HEK293 (cell line): ENCODE measurements at regions of chr11 and their contacts with region 1.

Region 1: DNA sequence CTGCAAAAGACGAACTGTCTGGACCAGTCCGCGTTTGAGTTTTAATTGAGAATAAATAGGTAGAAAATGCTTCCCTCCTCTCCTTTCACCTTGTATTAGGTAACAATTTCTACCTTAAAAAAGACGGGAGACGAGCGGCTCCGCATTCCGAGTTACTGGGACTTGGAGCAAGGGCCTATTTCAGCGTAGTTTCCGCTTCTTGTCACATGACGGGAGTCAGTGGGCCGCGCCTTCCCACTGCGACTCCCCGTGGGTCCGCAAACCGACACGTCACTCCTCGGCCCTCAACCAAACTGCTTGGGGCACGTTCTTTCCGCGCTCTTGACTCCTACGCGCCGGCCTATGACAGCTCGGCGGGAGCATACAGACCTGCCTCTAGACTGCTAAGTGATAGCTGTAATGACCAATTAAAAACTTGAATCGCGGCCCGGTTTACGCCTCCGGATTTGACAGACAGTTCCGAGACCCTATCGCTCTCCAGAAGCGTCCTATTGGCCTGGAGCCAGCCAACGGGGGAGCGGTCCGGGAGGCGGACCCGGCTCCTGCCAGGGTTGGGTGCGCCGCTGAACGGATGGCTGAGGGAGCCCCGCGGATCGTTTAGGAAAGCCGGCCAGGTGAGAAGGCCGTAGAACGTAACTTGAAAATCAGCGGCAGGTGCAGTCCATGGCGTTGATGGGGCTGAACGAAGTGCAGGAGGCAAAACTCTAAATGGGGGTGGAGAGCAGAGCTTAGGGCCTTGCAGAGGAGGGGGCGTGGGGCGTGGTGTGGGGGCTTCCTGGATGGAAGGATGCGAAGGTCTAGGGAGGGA is at the start of gene STT3A:
- H3K4me3 ChIP-seq: peak within 1 kb of the TSS; percentile 91
- H3K27ac ChIP-seq: peak within 1 kb of the TSS; percentile 63
- H3K4me1 ChIP-seq: no peaks in the 10 kb centered on the region; the same call in 1 of the 2 replicates
- CTCF ChIP-seq: no peak

Region 2: DNA sequence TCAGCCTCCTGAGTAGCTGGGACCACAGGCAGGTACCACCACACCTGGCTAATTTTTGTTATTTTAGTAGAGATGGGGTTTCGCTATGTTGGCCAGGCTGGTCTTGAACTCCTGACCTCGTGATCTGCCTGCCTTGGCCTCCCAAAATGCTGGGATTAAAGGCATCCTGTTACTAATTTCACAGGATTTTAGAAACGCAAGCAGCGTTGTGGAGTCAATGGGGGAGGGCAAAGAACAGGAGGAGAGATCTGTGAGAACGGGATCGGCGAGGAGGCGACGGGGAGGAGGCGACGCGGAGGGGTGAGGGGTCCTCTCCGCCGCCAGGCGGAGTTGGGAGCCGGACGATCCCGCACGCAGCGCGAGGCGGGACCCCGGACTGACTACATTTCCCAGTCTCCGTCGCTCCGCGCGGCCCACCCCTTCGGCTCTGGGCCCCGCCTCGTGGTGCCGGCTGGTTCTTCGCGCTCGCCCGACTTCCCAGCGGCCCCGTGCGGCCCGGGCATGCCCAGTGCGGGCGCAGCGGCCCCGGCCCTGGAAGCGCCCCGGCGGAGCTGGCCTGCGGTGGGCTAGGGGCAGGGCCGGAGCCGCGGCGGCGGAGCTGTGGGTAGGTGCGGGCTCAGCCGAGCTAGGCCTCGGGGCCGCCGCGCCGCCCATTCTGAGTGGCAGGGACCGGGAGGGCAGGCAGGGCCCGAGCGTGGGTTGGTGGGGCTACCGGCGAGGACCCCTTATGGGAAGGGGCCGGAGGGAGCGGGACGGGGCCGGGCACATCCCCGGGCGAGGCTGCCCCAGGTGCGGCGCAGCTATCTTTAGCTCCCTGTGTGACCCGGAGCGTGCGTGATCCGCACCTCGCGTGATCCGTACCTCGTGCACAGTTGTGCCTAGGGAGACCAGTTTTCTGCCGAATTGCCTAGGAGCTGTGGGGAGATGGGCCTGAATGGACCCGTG is 23.3 kb before region 1 on chr11 and contains the start of gene EI24:
- CTCF ChIA-PET with region 1: no interaction called
- POLR2A ChIA-PET with region 1: interaction called, 25 read pairs
- H3K4me3 ChIP-seq: peak within 1 kb of the TSS; percentile 67
- H3K27ac ChIP-seq: peak within 1 kb of the TSS; percentile 66
- H3K4me1 ChIP-seq: no peaks in the 10 kb centered on the region; the same call in none of the 2 replicates
- CTCF ChIP-seq: peak; percentile 80

Region 3: DNA sequence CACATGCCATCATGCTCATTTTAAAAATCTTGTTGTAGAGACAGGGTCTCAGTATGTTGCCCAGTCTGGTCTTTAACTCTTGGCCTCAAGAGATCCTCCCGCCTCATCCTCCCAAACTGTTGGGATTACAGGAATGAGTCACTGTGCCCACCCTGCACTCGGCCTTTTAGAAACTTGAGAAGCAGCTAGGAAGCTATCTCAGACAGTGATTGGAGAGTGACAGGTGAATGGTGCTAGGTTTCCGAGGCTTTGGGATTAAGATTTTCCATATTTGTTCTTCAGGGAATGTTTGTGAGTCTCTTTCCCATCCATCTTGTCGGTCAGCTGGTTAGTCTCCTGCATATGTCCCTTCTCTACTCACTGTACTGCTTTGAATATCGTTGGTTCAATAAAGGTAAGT is 12.7 kb before region 1 on chr11:
- CTCF ChIA-PET with region 1: interaction called, 5 read pairs
- POLR2A ChIA-PET with region 1: interaction called, 13 read pairs
- H3K4me3 ChIP-seq: no peak overlapping the region
- H3K27ac ChIP-seq: no peak overlapping the region
- H3K4me1 ChIP-seq: no peaks in the 10 kb centered on the region
- CTCF ChIP-seq: no peak

Region 4: GRCh38 chr11:125625630-125626287 is 33.2 kb after region 1 on chr11:
- CTCF ChIA-PET with region 1: no interaction called
- POLR2A ChIA-PET with region 1: interaction called, 24 read pairs
- H3K4me3 ChIP-seq: peak overlapping the region; percentile 74
- H3K27ac ChIP-seq: peak overlapping the region; percentile 94
- H3K4me1 ChIP-seq: peaks cover under 1% of the 10 kb centered on the region; the same call in 1 of the 2 replicates
- CTCF ChIP-seq: no peak

Region 5: DNA sequence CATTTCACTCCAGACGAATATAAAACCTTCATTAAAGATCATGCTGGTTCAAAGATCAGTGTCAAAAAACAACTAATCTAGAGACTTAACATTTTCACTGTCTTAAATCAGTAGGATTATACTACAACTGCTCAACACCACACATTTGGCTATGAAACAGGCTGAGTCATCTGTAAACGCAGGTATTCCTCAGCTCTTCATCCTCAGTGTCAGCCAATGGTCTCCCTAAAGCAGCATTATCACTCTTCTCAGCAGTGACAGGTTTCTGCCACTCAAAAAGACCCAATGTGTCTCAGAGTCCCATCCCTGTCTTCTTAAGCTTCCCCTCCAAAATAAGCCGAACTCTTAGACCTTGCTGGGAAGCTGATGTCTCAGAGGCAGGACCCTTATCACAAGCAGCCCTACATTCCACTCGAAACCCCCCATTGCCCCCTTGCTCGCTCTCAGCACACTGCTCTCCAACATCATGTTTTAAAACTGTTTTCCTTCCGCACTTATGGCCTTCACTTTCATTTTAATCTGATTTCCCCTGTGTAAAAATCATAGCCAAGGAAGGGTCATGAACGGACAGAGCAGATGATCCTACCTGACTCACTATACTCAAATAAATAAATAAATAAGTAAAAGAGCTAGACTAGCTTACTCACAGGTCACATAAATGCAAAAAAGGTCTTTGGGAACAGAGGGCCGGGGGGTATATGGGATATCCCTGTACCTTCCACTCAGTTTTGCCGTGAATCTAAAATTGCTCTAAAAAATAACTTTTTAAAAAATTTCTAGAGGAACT is 447.2 kb after region 1 on chr11:
- CTCF ChIA-PET with region 1: no interaction called
- POLR2A ChIA-PET with region 1: no interaction called
- H3K4me3 ChIP-seq: no peak overlapping the region
- H3K27ac ChIP-seq: no peak overlapping the region
- H3K4me1 ChIP-seq: no peaks in the 10 kb centered on the region
- CTCF ChIP-seq: no peak